ENCODE measurements at regions of chr13 and their contacts with region 1.

Region 1: GRCh38 chr13:30865123-30866049 is 40.7 kb upstream of the MEDAG start:
- DNase-seq: peak; percentile 89
- H3K4me3 Mint-ChIP-seq: peak overlapping the region; percentile 38
- H3K27ac Mint-ChIP-seq: peak overlapping the region; percentile 85
- H3K4me1 Mint-ChIP-seq: peaks cover 38% of the 10 kb centered on the region
- H3K27me3 Mint-ChIP-seq: no peaks in the 10 kb centered on the region
- CTCF ChIP-seq: peak; percentile 93

Region 2: GRCh38 chr13:30673669-30674521 is 191.5 kb before region 1 on chr13:
- CTCF ChIA-PET with region 1: interaction called, 3 read pairs
- POLR2A ChIA-PET with region 1: no interaction called
- intact Hi-C with region 1: loop called (anchors 1 kb)
- DNase-seq: peak; percentile 83
- H3K4me3 Mint-ChIP-seq: peak overlapping the region; percentile 75
- H3K27ac Mint-ChIP-seq: peak overlapping the region; percentile 16
- H3K4me1 Mint-ChIP-seq: no peaks in the 10 kb centered on the region
- H3K27me3 Mint-ChIP-seq: no peaks in the 10 kb centered on the region
- CTCF ChIP-seq: peak; percentile 54

Region 3: GRCh38 chr13:30679483-30680330 is 185.7 kb before region 1 on chr13:
- CTCF ChIA-PET with region 1: interaction called, 3 read pairs
- POLR2A ChIA-PET with region 1: no interaction called
- intact Hi-C with region 1: loop called (anchors 1 kb)
- DNase-seq: peak; percentile 44
- H3K4me3 Mint-ChIP-seq: no peak overlapping the region
- H3K27ac Mint-ChIP-seq: no peak overlapping the region
- H3K4me1 Mint-ChIP-seq: no peaks in the 10 kb centered on the region
- H3K27me3 Mint-ChIP-seq: no peaks in the 10 kb centered on the region
- CTCF ChIP-seq: peak; percentile 41

Region 4: GRCh38 chr13:30690282-30691188 is 174.9 kb before region 1 on chr13:
- CTCF ChIA-PET with region 1: interaction called, 4 read pairs
- POLR2A ChIA-PET with region 1: no interaction called
- intact Hi-C with region 1: loop called (anchors 1 kb)
- DNase-seq: peak; percentile 75
- H3K4me3 Mint-ChIP-seq: peak overlapping the region; percentile 79
- H3K27ac Mint-ChIP-seq: peak overlapping the region; percentile 93
- H3K4me1 Mint-ChIP-seq: peaks cover 6% of the 10 kb centered on the region
- H3K27me3 Mint-ChIP-seq: no peaks in the 10 kb centered on the region
- CTCF ChIP-seq: no peak

Region 5: DNA sequence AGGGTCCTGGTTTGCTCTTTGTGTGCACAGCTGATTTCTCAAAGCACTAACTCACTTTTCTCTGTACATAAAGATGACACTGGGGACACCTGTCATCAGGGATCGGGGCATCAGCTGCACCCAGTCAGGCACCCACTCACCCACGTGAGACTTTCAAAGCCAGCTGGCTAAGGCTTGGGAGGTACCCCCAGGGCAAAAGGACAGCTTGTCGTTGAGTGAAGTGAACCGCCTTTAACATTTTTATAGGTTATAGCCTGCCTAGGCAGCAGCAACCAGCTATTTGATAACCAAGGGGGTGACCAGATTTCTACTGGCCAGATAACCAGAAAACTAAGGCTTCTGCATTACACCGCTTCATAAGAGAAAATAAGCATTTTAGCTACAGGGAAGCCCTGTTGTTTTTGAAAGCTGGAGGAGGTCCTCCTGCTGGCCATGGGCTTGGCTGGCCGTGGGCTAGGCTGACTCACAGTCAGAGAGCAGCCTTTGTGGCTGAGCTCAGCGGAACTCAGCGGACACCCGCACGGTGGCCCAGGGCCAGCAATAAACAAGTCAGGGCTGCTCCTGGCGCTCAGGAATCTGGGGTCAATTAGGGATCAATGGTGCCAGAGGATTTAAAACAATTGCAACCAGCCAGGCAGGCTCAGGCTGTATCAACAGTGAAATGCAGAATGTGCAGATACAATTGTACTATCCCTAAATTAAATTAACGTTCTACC is 72.9 kb before region 1 on chr13:
- CTCF ChIA-PET with region 1: interaction called, 19 read pairs
- POLR2A ChIA-PET with region 1: interaction called, 5 read pairs
- intact Hi-C with region 1: no loop called
- DNase-seq: peak; percentile 92
- H3K4me3 Mint-ChIP-seq: no peak overlapping the region
- H3K27ac Mint-ChIP-seq: no peak overlapping the region
- H3K4me1 Mint-ChIP-seq: peaks cover 22% of the 10 kb centered on the region
- H3K27me3 Mint-ChIP-seq: no peaks in the 10 kb centered on the region
- CTCF ChIP-seq: peak; percentile 42

Region 6: GRCh38 chr13:30802953-30803478 is 62.4 kb before region 1 on chr13:
- CTCF ChIA-PET with region 1: interaction called, 22 read pairs
- POLR2A ChIA-PET with region 1: interaction called, 3 read pairs
- intact Hi-C with region 1: loop called (anchors 2 kb)
- DNase-seq: peak; percentile 80
- H3K4me3 Mint-ChIP-seq: peak overlapping the region; percentile 68
- H3K27ac Mint-ChIP-seq: peak overlapping the region; percentile 7
- H3K4me1 Mint-ChIP-seq: peaks cover 11% of the 10 kb centered on the region
- H3K27me3 Mint-ChIP-seq: no peaks in the 10 kb centered on the region
- CTCF ChIP-seq: peak; percentile 96

Region 7: GRCh38 chr13:30880856-30881155 is 15.4 kb after region 1 on chr13:
- CTCF ChIA-PET with region 1: interaction called, 49 read pairs
- POLR2A ChIA-PET with region 1: interaction called, 13 read pairs
- intact Hi-C with region 1: no loop called
- DNase-seq: peak; percentile 68
- H3K4me3 Mint-ChIP-seq: no peak overlapping the region
- H3K27ac Mint-ChIP-seq: peak overlapping the region; percentile 24
- H3K4me1 Mint-ChIP-seq: peaks cover 9% of the 10 kb centered on the region
- H3K27me3 Mint-ChIP-seq: no peaks in the 10 kb centered on the region
- CTCF ChIP-seq: no peak

Measured in MCF 10A (cell line).